Posterior vena cava (tissue), 2 donors: ENCODE measurements at regions of chr5 and their contacts with region 1.

Region 1: DNA sequence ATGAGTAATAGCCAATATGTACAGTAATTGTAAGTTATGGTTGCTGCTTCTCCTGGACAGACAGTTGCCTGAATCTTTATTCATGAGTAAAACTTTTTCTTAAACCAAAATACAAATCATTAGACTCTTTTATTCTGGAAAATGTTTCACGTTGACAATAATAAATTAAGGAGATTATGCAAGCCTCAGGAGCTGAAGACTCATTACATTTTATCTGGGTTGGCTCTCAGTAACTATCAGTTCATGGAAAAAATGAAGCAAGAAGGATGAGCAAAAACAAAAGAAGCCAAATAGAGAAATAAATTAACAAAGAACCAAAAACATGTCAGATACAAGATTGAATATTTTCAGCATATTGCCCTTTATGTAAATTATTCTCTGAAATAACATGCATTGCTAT is 88.9 kb upstream of the PRR16 start:
- DNase-seq: no peak

Region 2: DNA sequence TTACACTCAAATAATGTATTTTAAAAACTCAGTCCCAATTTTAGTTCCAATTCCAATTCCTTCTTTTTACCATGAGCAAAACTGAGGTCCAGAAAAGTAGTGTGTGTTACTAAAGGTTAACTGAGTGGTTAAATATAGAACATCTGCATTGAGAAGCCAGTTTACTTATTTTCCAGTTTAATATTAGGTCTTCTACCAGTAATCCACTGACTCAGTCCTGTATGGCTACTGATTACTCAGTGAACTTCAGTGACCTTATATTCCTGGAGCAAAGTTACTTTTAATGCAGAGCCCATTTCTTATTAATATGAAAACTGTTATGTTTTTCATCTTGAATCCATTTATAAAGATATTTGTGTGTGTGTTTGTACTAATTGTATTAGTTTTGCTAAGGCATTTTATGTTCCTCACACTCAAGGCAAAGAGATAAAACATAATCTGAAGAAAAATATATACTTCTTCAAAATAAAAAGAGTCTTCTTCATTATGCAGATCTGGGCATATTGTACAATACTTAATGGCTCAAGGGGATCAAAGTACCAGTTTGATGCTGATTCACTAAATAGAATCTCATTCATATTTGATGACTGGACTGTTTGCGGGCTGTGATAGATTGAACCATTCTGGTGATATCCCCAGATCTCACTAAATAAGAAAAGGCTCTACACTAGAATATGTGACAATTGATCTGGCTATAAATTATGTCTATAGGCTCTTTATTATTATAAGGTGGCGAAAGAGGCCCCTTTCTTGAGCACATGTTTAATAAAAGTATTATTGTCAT is 1243.5 kb before region 1 on chr5:
- intact Hi-C with region 1: no loop called
- DNase-seq: no peak

Region 3: DNA sequence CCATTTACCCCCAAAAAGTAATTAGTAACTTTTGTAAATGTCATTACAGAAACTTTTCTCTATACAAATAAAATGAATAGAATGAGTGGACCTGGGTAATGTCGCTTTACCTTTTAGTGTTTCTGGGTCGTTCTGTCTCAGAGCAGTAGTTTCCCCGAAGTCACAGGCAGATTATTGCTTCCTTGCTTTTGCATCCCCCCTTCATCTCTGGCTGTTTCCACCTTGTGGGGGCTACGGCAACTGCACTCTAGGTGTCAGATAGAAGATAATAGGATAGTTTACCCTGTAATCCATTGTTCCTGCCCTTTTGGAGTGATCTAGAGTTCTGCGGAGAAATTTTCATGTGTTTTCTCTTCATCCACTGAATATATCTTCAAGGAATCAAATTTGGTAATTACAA is 157.6 kb after region 1 on chr5:
- intact Hi-C with region 1: no loop called
- DNase-seq: no peak

Region 4: DNA sequence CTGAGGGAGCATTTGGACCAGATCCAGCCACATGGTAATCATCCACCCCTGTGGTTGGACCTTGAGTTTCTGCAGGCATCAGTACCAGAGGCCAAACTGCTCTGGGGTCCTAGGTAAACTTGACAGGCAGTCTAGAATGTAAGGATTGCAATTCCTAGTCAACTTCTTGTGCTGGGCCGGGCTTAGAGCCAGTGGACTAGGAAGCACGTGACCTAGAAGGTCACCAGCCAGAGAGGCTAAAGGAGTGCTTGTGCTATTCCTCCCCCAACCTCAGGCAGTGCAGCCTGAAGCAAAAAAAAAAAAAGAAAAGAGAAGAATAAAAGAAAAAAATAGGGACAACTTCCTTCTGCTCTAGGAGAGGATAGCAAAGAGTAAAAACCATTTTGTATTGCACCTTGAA is 1070.3 kb after region 1 on chr5:
- intact Hi-C with region 1: loop called in 1 of 2 experiments (anchors 5 kb)
- DNase-seq: no peak